Mucosa of descending colon (tissue), 3 donors: ENCODE measurements at regions of chr12 and their contacts with region 1.

Region 1: GRCh38 chr12:110826592-110827200 is 20.1 kb upstream of the CCDC63 start:
- DNase-seq: peak; percentile 82 to 97 (median 92)
- ATAC-seq: peak; percentile 99
- H3K4me3 ChIP-seq: no peak overlapping the region
- H3K4me1 ChIP-seq: no peaks in the 10 kb centered on the region
- CTCF ChIP-seq: peak; percentile 67

Region 2: GRCh38 chr12:110613771-110614684 is 212.7 kb before region 1 on chr12 and contains the start of gene TCTN1:
- intact Hi-C with region 1: no loop called
- DNase-seq: peak; percentile 98
- ATAC-seq: peak; percentile 100
- H3K4me3 ChIP-seq: peak within 1 kb of the TSS; percentile 25
- H3K4me1 ChIP-seq: no peaks in the 10 kb centered on the region
- CTCF ChIP-seq: no peak
- total RNA-seq, gene TCTN1: 7.2 to 23.7 (median 8.2) TPM

Region 3: DNA sequence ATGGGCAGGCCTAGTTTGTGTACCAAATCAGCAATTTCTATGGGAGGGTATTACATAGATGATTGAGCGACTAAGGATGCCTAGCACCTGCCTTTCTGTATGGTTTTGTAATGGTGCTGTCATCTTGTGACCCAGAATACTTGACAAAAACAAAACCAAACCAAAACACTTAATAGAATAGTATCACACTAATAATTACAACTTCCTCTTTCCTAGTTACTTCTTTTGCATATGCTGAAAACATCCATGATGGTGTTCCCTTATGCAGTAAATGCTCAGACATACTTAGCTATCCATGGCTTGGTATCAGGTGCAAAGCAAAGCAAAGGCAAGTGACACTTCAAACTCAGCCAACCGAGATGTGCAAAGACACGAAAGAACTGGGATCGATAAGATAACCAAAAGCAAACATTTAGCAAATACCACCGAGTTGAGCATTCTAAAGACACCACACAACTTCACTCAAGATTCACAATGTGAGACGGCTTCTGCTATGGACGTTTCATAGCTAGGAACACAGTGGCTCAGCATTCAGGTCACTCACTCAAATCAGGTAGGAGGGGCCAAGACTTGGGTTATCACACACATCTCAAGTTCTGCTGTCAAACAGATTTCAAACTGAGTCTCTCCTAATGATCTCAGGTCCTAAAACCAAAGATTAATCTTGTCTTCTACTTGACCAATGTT is 108.3 kb before region 1 on chr12:
- intact Hi-C with region 1: loop called in 1 of 2 experiments (anchors 10 kb)
- DNase-seq: no peak
- ATAC-seq: no peak
- H3K4me3 ChIP-seq: no peak overlapping the region
- H3K4me1 ChIP-seq: no peaks in the 10 kb centered on the region
- CTCF ChIP-seq: no peak